Panc1 (cell line): ENCODE measurements at regions of chr11 and their contacts with region 1.

Region 1: DNA sequence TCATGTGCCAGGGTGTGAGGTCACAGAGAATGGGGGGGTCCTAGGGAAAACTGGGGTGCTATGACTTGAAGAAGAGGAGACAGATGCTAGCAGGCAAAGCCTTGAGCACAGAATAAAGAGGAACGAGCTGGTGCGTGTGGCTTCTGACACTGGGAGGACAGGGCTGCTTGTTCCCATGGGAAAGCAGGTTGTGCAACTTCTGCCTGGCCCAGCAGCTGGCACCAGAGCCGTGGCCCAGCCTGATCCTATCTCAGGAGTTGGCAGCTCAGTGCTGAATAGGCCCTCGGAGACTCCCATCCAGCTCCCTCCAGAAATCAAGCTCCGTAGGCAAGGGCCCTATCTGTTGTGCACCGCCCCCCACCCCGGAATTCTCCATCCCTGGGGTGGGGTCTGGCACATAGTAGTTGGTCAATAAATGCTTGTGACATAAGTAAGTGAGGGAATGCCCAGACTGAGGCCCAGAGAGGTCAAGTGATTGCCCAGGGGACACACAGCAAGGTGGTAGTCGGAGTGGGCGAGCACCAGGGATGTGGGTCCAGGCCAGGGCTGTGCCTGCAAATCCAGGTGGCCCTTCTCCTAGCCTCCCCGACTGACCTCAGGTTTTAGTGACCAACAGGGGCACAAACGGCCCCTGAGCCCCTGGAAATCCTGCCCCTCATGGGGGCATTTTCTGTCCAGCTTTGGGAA is 19.5 kb upstream of the FADD start:
- DNase-seq: no peak
- ATAC-seq: no peak
- H3K4me3 ChIP-seq: no peak overlapping the region
- H3K27ac ChIP-seq: no peak overlapping the region
- H3K4me1 ChIP-seq: no peaks in the 10 kb centered on the region
- H3K27me3 ChIP-seq: no peaks in the 10 kb centered on the region
- CTCF ChIP-seq: no peak

Region 2: GRCh38 chr11:70108250-70108649 is 75.4 kb before region 1 on chr11:
- CTCF ChIA-PET with region 1: no interaction called
- POLR2A ChIA-PET with region 1: no interaction called
- in situ Hi-C with region 1: loop called (anchors 10 kb)
- intact Hi-C with region 1: no loop called
- DNase-seq: no peak
- ATAC-seq: 0 out of 2 replicates have a peak, but pooled peaks have one; percentile 3
- H3K4me3 ChIP-seq: no peak overlapping the region
- H3K27ac ChIP-seq: no peak overlapping the region
- H3K4me1 ChIP-seq: peaks cover 9% of the 10 kb centered on the region; the same call in 1 of the 2 replicates
- H3K27me3 ChIP-seq: no peaks in the 10 kb centered on the region; the same call in 1 of the 2 replicates
- CTCF ChIP-seq: no peak